Activated naive CD4-positive, alpha-beta T cell treated with anti-CD3 and anti-CD28 coated beads for 36 hours (primary cell): ENCODE measurements at regions of chr3 and their contacts with region 1.

Region 1: DNA sequence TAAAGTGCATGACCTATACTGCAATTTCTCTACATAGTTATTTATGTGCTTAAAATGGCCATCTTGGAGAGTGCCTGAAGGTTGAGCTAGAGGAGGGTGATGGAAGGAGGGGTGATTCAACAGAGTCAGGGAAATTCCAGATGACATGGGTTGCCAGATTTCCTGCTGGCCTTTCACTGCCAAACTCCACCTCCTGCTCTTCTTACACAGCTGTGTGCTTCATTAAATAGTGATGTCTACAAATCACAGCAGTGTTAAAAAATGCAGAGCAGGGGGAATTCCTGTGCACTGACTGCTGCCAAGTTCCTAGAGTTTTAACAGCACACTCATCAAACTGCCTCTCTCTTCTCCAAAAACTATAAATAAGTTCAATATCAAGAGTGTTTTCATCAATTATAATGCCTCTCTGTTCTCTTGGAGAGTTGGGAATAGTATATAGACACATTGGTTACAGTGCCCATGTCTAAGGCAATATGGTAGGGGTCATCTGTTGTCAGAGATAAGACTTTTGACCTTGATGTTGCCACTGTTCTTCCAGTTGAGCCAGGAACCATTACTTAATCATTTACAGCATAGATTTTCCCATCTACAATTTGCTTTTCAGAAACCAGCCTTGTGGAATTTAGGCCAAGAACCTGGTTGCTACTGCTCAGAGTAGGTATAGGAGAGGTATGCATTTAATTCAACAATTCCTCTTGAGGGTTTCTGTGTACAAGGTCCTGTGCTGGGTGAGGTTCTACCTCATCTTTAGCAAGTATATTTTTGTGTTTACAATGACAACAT is 79.6 kb downstream of the TP63 start:
- DNase-seq: peak; percentile 44
- H3K4me3 Mint-ChIP-seq: no peak overlapping the region
- H3K27ac Mint-ChIP-seq: no peak overlapping the region
- H3K4me1 Mint-ChIP-seq: peaks cover 20% of the 10 kb centered on the region
- H3K27me3 Mint-ChIP-seq: no peaks in the 10 kb centered on the region

Region 2: GRCh38 chr3:189726277-189726676 is 15.5 kb after region 1 on chr3:
- CTCF ChIA-PET with region 1: no interaction called
- intact Hi-C with region 1: loop called (anchors 1 kb)
- DNase-seq: no peak
- H3K4me3 Mint-ChIP-seq: no peak overlapping the region
- H3K27ac Mint-ChIP-seq: no peak overlapping the region
- H3K4me1 Mint-ChIP-seq: no peaks in the 10 kb centered on the region
- H3K27me3 Mint-ChIP-seq: no peaks in the 10 kb centered on the region